ENCODE measurements at regions of chr15 and their contacts with region 1.

Region 1: DNA sequence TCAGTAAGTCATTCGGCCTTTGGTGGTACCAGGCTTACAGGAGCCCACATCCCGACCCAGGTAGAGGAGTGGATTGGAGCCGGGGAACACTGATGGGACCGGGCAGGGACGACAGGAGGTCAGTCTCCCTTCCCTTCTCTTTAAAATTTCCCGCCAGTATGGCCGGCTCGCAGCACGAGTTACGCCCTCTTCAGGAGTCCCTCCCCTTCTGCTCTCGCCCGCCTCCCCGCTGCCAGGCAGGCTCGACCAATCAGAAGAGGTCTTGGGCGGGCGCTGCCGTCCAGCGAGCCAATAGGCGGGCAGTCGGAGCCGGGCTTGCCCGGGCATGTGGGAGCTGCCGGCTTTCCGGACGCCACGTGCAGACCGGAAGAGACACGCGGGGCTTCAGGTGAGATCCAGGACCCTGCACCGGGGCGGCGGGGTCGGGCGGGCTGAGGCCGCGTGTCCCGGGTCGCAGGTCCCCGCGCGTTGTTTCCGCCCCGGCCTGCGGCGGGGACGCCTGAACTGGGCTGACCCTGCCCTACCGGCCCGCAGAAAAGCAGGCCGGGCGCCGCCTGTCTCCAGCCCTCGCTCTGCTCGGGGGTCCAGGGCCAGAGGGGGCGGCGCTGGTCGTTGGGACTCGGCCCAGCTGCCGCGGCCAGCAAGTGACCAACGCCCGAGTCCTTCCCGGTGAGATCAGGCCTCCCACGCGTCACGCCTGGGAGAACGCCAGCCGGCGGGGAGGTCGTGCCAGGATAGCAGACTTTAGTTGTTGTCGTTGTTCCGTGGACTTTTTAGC is at the start of gene AEN:
- DNase-seq: peak; percentile 90
- ATAC-seq: peak; percentile 94
- H3K4me3 Mint-ChIP-seq: peak within 1 kb of the TSS; percentile 87
- H3K27ac Mint-ChIP-seq: peak within 1 kb of the TSS; percentile 92
- H3K4me1 Mint-ChIP-seq: peaks cover 50% of the 10 kb centered on the region
- H3K27me3 Mint-ChIP-seq: peaks cover 2% of the 10 kb centered on the region
- CTCF ChIP-seq: no peak
- total RNA-seq, gene AEN: 40.1 and 41.9 TPM in 2 replicates

Region 2: DNA sequence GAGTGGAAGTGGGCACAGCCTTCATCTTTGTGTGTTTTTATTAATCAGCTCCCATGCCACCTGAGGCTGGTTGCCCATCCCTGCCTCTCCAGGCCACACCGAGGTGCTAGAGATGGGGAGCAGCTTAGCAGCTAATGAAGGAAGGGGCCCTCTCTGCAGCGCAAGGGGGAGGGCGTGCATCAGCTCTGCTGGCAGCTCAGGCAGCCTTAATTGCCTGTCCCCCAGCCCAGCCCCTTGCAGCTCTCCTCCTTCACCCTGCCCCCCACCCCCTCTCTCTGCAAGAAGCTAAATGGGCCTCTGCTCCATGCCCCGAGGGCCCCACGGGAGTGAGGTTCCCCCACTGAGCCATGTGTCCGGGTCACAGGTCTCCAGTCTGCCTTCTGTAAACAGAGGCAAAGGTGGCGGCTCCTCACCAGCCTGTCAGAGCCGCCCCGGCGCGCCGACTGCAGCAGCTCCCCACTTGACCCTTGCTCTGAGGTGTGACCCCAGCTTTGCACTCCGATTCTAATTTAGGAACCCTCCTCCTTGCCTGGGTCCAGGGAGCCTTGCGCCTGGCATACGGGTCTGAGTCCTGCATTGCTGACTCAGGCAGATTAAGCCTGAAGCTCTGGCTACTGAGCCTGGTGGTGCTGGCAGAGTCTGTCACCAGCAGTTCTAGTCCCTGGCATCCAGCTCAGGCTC is 336.7 kb before region 1 on chr15:
- CTCF ChIA-PET with region 1: no interaction called
- POLR2A ChIA-PET with region 1: no interaction called
- intact Hi-C with region 1: no loop called
- DNase-seq: no peak
- ATAC-seq: no peak
- H3K4me3 Mint-ChIP-seq: no peak overlapping the region
- H3K27ac Mint-ChIP-seq: no peak overlapping the region
- H3K4me1 Mint-ChIP-seq: no peaks in the 10 kb centered on the region
- H3K27me3 Mint-ChIP-seq: peaks cover 41% of the 10 kb centered on the region
- CTCF ChIP-seq: no peak

Region 3: DNA sequence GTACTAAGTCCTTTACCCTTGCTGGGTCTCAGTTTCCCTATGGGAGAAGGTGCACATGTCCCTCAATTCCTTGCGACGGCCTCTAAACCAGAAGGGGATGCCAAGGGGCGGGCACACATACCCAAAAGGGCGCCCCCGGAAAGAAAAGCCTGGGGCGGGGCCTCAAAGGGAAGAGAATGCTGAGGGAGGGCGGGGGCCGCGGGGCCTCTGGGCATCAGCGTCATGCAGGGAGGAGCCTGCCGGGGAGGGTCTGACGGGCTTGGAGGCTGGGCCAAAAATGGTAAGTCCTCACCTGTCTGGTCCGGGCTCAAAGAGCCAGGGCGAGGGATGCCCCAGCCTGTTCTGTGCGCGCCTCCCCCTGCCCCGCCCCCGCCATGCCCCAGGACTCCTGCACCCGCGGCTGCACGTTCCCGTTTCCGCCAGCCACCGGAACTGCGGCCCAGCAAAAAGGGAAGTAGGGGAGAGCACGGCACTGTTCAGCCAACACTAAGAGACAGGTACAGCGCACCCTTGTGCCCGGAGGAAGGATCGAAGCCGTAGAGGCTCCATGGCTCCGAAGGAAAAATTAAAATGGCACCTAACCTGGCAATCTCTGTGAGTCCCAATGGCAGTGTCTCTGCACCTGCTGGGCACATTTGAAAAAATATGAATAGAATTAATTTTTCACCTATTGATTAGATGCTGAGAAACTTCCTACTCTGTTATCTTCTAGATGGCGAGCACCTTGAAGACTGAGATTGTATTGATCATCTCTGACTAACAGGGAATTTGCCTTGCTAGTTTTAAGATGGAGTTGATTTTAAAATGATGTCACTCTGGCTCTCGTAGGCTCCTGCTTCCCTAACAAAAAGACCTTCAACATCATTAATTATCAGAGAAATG is 74.7 kb before region 1 on chr15 and contains the start of gene DET1:
- CTCF ChIA-PET with region 1: no interaction called
- POLR2A ChIA-PET with region 1: no interaction called
- intact Hi-C with region 1: loop called (anchors 1 kb)
- DNase-seq: peak; percentile 88
- ATAC-seq: peak; percentile 94
- H3K4me3 Mint-ChIP-seq: peak within 1 kb of the TSS; percentile 92
- H3K27ac Mint-ChIP-seq: peak within 1 kb of the TSS; percentile 94
- H3K4me1 Mint-ChIP-seq: peaks cover 14% of the 10 kb centered on the region
- H3K27me3 Mint-ChIP-seq: no peaks in the 10 kb centered on the region
- CTCF ChIP-seq: no peak
- total RNA-seq, gene DET1: 5.7 and 7.1 TPM in 2 replicates

Region 4: DNA sequence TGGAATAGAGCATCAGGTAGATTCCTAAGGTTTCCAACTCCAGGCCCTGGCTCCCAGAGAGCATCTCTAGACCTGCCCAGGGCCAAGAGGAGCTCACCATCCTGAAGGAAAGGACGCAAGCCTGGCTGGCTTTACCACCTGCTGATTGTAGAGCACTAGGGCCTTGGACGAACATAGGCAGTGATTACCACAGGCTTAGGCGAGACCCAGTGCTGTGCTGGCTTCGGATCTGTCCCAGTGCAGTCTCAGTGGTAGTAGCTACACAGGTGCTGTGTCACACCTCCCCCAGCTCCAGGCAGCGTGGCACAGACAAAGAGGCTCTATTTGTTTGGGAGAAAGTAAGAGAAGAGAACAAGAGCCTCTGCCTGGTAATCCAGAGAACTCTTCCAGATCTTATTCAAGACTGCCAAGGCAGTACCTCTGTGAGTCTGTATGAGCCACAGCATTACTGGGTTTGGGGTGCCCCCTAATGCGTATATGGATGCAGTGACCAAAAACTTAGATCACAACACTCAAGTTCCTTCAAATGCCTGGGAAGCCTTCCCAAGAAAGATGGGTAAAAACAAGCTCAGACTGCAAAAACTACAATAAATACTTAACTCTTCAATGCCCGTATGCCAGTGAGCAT is 43.1 kb after region 1 on chr15:
- CTCF ChIA-PET with region 1: interaction called, 81 read pairs
- POLR2A ChIA-PET with region 1: interaction called, 8 read pairs
- intact Hi-C with region 1: loop called (anchors 1 kb)
- DNase-seq: no peak
- ATAC-seq: peak; percentile 81
- H3K4me3 Mint-ChIP-seq: no peak overlapping the region
- H3K27ac Mint-ChIP-seq: no peak overlapping the region
- H3K4me1 Mint-ChIP-seq: peaks cover 21% of the 10 kb centered on the region
- H3K27me3 Mint-ChIP-seq: peaks cover 6% of the 10 kb centered on the region
- CTCF ChIP-seq: no peak

Region 5: DNA sequence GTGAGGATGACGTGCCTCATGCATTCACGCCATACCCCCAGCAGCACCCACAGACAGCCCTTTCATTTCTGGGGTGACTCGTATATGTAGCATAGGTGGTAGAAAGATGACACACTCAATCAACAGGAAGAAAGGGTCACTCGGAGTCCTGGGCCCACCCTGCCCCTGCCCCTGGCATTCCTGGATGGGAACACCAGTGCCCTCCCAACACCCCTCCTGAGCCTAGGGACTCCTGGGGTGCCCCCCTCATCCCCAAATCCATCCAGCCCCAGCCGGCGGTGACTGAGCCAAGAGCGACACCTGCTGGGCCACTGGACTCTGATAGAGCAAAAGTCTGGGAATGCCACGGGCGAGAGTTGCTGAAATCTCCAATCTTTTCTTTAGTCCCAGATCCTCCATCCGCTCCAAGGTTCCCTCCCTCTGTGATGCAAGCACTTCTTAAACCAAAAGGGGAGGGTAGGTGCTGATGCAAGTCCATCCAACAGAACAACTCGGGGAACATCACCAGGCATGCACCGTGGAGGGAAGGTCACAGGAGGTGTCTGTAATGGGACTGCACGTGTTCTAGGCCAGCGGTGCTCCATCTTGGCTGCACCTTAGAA is 213.1 kb after region 1 on chr15:
- CTCF ChIA-PET with region 1: interaction called, 31 read pairs
- POLR2A ChIA-PET with region 1: interaction called, 3 read pairs
- intact Hi-C with region 1: loop called (anchors 1 kb)
- DNase-seq: no peak
- ATAC-seq: no peak
- H3K4me3 Mint-ChIP-seq: no peak overlapping the region
- H3K27ac Mint-ChIP-seq: no peak overlapping the region
- H3K4me1 Mint-ChIP-seq: no peaks in the 10 kb centered on the region
- H3K27me3 Mint-ChIP-seq: no peaks in the 10 kb centered on the region
- CTCF ChIP-seq: no peak

Region 6: DNA sequence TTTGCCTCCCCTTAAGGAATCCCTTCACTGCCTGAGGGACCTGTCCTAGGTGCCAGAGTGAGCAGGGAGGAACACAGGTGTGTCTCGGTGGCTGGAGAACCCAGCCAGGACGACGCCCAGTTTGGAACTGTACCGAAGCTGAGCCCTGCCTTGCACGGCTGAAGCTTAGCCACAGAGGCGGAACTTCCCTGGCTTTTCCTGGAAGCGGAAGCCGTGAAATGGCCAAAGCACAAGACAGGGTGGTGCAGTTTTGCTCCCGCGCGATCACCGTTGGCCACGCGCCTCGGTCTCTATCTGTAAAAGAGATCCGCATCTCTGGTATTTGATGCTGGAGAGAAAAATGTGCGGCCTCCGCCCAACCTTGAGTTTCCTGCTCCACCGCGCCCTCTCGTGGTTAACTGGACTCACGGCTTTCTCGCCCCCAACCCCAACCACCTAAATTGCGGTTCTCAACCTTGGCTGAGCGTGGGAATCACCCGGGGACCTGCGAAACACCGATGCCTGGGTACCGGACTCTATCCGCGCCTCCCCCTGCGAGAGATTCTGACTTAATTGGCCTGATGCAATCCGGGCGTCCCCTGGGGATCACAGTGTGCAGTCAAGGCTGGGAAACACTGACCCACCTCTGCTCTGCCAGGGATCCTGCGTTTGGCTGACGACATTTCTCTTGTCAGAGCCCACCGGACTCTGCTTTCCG is 396.3 kb after region 1 on chr15:
- CTCF ChIA-PET with region 1: interaction called, 4 read pairs
- POLR2A ChIA-PET with region 1: no interaction called
- intact Hi-C with region 1: loop called (anchors 1 kb)
- DNase-seq: peak; percentile 48
- ATAC-seq: peak; percentile 58
- H3K4me3 Mint-ChIP-seq: peak overlapping the region; percentile 44
- H3K27ac Mint-ChIP-seq: no peak overlapping the region
- H3K4me1 Mint-ChIP-seq: peaks cover 8% of the 10 kb centered on the region
- H3K27me3 Mint-ChIP-seq: peaks cover 32% of the 10 kb centered on the region
- CTCF ChIP-seq: no peak

Region 7: GRCh38 chr15:89177633-89178306 is 556.6 kb after region 1 on chr15:
- CTCF ChIA-PET with region 1: interaction called, 5 read pairs
- POLR2A ChIA-PET with region 1: no interaction called
- intact Hi-C with region 1: loop called (anchors 2 kb)
- DNase-seq: no peak
- ATAC-seq: no peak
- H3K4me3 Mint-ChIP-seq: no peak overlapping the region
- H3K27ac Mint-ChIP-seq: no peak overlapping the region
- H3K4me1 Mint-ChIP-seq: peaks cover 2% of the 10 kb centered on the region
- H3K27me3 Mint-ChIP-seq: no peaks in the 10 kb centered on the region
- CTCF ChIP-seq: no peak